ENCODE measurements at regions of chr2 and their contacts with region 1.

Region 1: DNA sequence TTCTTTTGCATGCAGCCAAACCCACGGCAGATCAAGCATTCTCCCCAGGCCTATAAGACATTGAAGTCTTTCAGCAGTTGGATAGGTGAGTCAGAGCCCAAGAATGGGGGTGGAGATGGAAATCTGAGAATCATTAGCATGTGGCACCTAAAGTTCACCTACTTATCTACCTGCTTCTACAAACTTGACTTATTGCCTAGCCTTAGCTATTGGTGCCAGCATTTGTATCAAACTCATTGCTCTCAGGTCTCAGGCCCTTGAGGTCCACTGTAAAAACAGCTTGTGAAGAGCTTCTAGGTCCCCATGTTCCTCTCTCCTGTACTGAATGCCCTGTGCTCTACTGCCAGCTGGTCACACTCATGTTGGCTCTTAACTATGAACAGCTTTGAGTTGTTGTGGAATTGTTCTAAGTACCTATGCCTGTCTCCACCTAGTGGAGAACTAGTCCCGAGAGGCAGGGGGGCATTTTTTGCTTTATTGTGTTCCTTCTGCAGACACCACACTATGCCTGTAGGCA is 278.4 kb upstream of the SPRED2 start:
- DNase-seq: peak; percentile 52
- H3K4me3 Mint-ChIP-seq: no peak overlapping the region
- H3K27ac Mint-ChIP-seq: no peak overlapping the region
- H3K4me1 Mint-ChIP-seq: peaks cover 37% of the 10 kb centered on the region
- H3K27me3 Mint-ChIP-seq: no peaks in the 10 kb centered on the region
- CTCF ChIP-seq: peak; percentile 31

Region 2: DNA sequence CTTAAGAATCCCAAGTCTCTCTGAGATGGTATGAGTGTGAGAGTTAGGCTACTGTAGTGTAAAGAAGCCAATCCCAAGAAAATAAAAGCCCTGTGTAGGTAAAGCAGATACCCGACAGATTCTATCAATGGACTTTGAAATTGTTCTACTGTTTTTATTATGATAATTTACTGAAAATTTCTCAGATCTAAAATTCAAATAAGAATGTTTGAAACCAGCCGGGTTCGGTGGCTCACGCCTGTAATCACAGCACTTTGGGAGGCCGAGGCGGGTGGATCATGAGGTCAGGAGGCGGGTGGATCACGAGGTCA is 70.1 kb before region 1 on chr2:
- CTCF ChIA-PET with region 1: interaction called, 5 read pairs
- intact Hi-C with region 1: loop called (anchors 2 kb)
- DNase-seq: no peak
- H3K4me3 Mint-ChIP-seq: peak overlapping the region; percentile 74
- H3K27ac Mint-ChIP-seq: peak overlapping the region; percentile 41
- H3K4me1 Mint-ChIP-seq: no peaks in the 10 kb centered on the region
- H3K27me3 Mint-ChIP-seq: peaks cover 12% of the 10 kb centered on the region
- CTCF ChIP-seq: no peak

Measured in Calu3 (cell line).